Activated naive CD4-positive, alpha-beta T cell treated with anti-CD3 and anti-CD28 coated beads for 36 hours (primary cell): ENCODE measurements at regions of chr5 and their contacts with region 1.

Region 1: DNA sequence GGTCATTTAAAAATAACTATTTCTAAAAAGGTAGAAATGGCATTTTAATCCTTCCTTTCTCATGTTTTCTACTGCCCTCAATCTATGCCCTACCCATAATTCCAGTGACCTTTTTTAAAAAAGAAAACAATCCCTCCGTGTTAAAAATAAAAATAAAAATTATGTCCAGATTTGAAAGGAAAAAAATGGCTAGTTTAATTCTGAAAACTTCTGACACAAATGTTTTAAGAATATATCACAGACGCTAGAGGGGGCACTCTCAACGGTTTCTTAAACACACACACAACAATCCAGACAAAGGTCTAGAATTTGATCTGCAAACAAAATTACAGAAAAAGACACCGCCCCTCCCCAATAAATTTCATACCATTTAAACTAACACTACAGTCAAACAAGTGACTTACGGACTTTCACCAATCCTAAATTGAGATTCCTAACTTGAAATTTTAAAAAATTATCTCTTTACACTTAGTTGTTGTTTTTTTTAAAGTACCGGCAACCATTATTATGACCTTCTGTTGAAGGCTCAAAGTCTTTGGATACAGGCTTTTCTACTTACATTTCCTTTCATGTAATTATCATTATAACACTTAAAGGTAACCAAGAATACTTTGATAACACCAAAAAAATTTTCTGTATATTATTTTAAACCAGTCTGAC is 38.2 kb downstream of the CLINT1 start:
- DNase-seq: peak; percentile 50
- H3K4me3 Mint-ChIP-seq: no peak overlapping the region
- H3K27ac Mint-ChIP-seq: no peak overlapping the region
- H3K4me1 Mint-ChIP-seq: peaks cover 30% of the 10 kb centered on the region
- H3K27me3 Mint-ChIP-seq: no peaks in the 10 kb centered on the region

Region 2: GRCh38 chr5:157484768-157485167 is 336.0 kb before region 1 on chr5:
- CTCF ChIA-PET with region 1: no interaction called
- intact Hi-C with region 1: no loop called
- DNase-seq: no peak
- H3K4me3 Mint-ChIP-seq: no peak overlapping the region
- H3K27ac Mint-ChIP-seq: no peak overlapping the region
- H3K4me1 Mint-ChIP-seq: peaks cover 3% of the 10 kb centered on the region
- H3K27me3 Mint-ChIP-seq: peaks cover 3% of the 10 kb centered on the region

Region 3: GRCh38 chr5:157799578-157799977 is 21.1 kb before region 1 on chr5:
- CTCF ChIA-PET with region 1: no interaction called
- intact Hi-C with region 1: no loop called
- DNase-seq: no peak
- H3K4me3 Mint-ChIP-seq: no peak overlapping the region
- H3K27ac Mint-ChIP-seq: no peak overlapping the region
- H3K4me1 Mint-ChIP-seq: no peaks in the 10 kb centered on the region
- H3K27me3 Mint-ChIP-seq: no peaks in the 10 kb centered on the region

Region 4: DNA sequence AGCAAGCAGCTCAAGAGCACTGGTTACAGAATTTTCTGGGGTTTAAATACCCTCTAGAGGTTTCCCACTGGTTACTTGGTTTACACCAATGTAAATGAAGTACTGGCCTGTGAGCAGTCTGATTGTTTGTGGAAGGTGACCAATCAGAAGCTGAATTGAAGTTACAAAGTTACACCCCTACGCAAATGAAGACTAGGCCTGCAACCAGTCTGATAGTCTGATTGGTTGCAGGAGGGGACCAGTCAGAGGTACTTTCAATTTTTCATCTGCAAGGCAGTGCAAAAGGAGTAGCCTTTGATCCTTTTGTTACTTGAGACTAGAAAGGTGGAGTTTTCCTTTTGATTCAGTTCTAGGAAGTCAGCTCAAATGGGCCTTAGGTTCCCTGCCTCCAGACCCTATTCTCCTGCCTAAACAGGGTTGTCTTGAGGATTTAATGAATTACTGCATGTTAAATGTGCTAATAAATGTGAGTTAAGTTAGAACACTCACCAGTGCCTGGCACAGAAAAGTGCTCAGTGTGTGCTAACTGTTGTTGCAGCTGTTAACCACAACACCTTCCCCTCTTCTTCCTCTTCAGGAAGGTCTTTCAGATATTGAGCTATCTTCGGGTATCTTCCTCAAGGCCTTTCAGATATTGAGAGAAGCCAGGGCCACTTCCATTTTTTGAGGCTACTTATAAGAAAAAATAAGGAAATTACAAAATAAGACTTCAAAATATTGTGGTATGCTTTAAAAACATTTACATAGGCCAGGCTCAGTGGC is 70.3 kb after region 1 on chr5:
- CTCF ChIA-PET with region 1: no interaction called
- intact Hi-C with region 1: no loop called
- DNase-seq: no peak
- H3K4me3 Mint-ChIP-seq: no peak overlapping the region
- H3K27ac Mint-ChIP-seq: no peak overlapping the region
- H3K4me1 Mint-ChIP-seq: peaks cover 17% of the 10 kb centered on the region
- H3K27me3 Mint-ChIP-seq: no peaks in the 10 kb centered on the region

Region 5: DNA sequence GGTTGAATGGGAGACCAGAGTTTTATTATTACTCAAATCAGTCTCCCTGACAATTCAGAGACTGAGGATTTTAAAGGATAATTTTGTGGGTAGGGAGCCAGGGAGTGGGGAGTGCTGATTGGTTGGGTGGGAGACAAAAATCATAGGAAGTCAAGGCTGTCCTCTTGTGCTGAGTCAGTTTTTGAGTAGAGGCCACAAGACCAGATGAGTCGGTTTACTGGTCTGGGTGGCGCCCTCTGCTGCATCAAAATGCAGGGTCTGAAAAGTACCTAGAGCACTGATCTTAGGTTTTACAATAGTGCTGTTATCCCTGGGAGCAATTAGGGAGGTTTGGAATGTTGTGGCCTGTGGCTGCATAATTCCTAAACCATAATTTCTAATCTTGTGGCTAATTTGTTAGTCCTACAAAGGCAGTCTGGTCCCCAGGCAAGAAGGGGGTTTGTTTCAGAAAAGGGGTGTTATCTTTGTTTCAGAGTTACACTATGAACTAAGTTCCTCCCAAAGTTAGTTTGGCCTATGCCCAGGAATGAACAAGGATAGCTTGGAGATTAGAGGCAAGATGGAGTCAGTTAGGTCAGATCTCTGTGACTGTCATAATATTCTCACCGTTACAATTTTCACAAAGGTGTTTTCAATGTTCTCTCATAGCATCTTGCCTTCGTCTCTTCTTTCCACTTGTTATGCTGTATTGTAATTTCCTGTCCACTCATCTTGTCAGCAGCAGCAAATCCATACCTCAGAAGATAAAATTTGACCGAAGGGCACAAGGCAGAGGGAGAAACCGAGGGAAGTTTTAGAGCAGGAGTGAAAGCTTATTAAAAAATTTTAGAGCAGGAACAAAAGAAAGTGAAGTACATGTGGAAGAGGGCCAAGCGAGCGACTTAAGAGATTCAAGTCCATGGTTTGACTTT is 97.4 kb after region 1 on chr5:
- CTCF ChIA-PET with region 1: interaction called, 18 read pairs
- intact Hi-C with region 1: loop called (anchors 1 kb)
- DNase-seq: peak; percentile 88
- H3K4me3 Mint-ChIP-seq: no peak overlapping the region
- H3K27ac Mint-ChIP-seq: no peak overlapping the region
- H3K4me1 Mint-ChIP-seq: peaks cover 22% of the 10 kb centered on the region
- H3K27me3 Mint-ChIP-seq: no peaks in the 10 kb centered on the region

Region 6: GRCh38 chr5:157994906-157995519 is 174.3 kb after region 1 on chr5:
- CTCF ChIA-PET with region 1: interaction called, 14 read pairs
- intact Hi-C with region 1: loop called (anchors 1 kb)
- DNase-seq: peak; percentile 64
- H3K4me3 Mint-ChIP-seq: no peak overlapping the region
- H3K27ac Mint-ChIP-seq: no peak overlapping the region
- H3K4me1 Mint-ChIP-seq: peaks cover 11% of the 10 kb centered on the region
- H3K27me3 Mint-ChIP-seq: peaks cover 22% of the 10 kb centered on the region